ENCODE measurements at regions of chr3 and their contacts with region 1.

Region 1: GRCh38 chr3:133583396-133583795 is 9.9 kb downstream of the CDV3 start:
- DNase-seq: no peak
- ATAC-seq: no peak

Region 2: GRCh38 chr3:132615881-132616280 is 967.5 kb before region 1 on chr3:
- intact Hi-C with region 1: no loop called
- DNase-seq: no peak
- ATAC-seq: no peak

Region 3: GRCh38 chr3:133093366-133093765 is 490.0 kb before region 1 on chr3:
- intact Hi-C with region 1: no loop called
- DNase-seq: no peak
- ATAC-seq: no peak

Region 4: DNA sequence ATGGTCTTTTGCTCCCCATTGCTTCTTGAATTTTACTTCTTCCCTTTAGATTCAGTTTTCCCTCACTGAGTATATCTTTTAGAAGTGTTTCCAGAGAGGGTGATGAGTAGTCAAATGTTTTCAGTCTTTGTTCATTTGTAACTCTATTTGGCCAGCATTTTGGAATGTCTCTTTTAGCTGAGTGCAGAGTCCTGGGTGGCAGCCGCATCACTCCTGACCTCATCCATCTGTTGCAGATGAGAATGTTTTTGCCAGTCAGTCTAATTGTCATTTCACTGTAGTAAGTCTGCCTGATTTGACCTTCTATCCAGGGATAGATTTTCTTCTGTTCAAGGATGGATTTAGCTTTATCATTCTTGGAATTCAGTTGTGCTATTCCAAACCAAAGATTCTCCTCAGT is 229.5 kb after region 1 on chr3:
- intact Hi-C with region 1: loop called in 1 of 2 experiments (anchors 5 kb)
- DNase-seq: no peak
- ATAC-seq: no peak